ENCODE measurements at regions of chr6 and their contacts with region 1.

Region 1: GRCh38 chr6:125956506-125957390 is at the start of gene HINT3:
- DNase-seq: peak; percentile 97 to 98 (median 98)
- ATAC-seq: peak; percentile 91
- H3K4me3 ChIP-seq: peak within 1 kb of the TSS; percentile 81 to 82
- H3K27ac ChIP-seq: peak within 1 kb of the TSS; percentile 78 to 96 (median 93)
- H3K4me1 ChIP-seq: peaks cover 42% of the 10 kb centered on the region
- H3K27me3 ChIP-seq: no peaks in the 10 kb centered on the region
- CTCF ChIP-seq: peak; percentile 97 to 99 (median 98)
- POLR2A ChIP-seq: peak in 2 of 3 donors; percentile 77 to 80
- total RNA-seq, gene HINT3: 8.8 to 14.5 TPM

Region 2: GRCh38 chr6:125790358-125791150 is 166.2 kb before region 1 on chr6 and contains the start of gene NCOA7:
- intact Hi-C with region 1: loop called (anchors 10 kb)
- DNase-seq: peak; percentile 69 to 79 (median 74)
- ATAC-seq: peak; percentile 86
- H3K4me3 ChIP-seq: peak within 1 kb of the TSS; percentile 72 to 84
- H3K27ac ChIP-seq: peak within 1 kb of the TSS; percentile 90 to 97 (median 94)
- H3K4me1 ChIP-seq: peaks cover 29% of the 10 kb centered on the region
- H3K27me3 ChIP-seq: no peaks in the 10 kb centered on the region
- CTCF ChIP-seq: peak in 1 of 7 experiments; percentile 22
- POLR2A ChIP-seq: peak; percentile 77 to 88 (median 83)
- total RNA-seq, gene NCOA7: 26.5 to 30.0 TPM

Region 3: DNA sequence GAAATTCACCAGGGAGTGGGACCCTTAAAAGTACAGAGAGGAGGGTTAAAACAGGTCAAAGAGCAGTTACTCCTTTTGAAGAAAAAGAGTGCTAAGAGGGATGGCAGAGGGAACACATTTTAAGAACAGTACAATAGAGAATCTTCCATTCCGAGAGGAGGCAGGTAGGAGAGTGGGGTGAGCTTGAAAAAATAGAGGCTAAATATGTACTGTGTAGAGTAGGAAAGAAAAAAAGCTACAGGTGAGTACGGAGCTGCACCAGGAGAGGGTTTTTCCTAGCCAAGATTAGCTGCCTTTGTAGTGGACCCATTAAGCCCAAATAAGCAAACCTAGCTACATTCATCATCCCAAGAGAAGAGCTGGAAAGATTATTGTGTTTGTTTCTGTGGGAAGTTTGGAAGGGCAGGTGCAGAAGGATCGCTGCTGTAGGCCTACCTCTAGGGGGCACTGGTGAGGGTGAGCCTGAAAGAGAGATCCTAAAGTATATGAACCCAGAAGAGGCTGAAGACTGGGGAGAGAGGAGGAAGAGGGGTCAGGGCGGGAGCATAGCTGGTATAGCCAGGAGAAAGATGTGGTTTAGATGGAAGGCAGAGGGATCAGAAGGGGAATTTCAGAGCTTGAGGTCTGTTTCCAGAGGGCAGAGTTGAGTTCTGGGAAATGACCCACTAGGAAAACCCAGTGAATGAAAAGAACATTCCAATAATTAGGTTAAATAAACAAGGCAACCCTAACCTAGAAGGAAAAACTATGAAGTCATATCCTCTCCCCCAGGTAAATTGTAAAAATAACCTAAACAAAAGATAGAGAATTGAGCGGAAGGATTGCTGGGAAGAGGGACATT is 50.4 kb before region 1 on chr6:
- intact Hi-C with region 1: loop called (anchors 10 kb)
- DNase-seq: peak; percentile 45 to 62 (median 56)
- ATAC-seq: peak; percentile 73
- H3K4me3 ChIP-seq: no peak overlapping the region
- H3K27ac ChIP-seq: no peak overlapping the region
- H3K4me1 ChIP-seq: peaks cover 11% of the 10 kb centered on the region
- H3K27me3 ChIP-seq: no peaks in the 10 kb centered on the region
- CTCF ChIP-seq: peak; percentile 37 to 75 (median 63)
- POLR2A ChIP-seq: no peak

Region 4: DNA sequence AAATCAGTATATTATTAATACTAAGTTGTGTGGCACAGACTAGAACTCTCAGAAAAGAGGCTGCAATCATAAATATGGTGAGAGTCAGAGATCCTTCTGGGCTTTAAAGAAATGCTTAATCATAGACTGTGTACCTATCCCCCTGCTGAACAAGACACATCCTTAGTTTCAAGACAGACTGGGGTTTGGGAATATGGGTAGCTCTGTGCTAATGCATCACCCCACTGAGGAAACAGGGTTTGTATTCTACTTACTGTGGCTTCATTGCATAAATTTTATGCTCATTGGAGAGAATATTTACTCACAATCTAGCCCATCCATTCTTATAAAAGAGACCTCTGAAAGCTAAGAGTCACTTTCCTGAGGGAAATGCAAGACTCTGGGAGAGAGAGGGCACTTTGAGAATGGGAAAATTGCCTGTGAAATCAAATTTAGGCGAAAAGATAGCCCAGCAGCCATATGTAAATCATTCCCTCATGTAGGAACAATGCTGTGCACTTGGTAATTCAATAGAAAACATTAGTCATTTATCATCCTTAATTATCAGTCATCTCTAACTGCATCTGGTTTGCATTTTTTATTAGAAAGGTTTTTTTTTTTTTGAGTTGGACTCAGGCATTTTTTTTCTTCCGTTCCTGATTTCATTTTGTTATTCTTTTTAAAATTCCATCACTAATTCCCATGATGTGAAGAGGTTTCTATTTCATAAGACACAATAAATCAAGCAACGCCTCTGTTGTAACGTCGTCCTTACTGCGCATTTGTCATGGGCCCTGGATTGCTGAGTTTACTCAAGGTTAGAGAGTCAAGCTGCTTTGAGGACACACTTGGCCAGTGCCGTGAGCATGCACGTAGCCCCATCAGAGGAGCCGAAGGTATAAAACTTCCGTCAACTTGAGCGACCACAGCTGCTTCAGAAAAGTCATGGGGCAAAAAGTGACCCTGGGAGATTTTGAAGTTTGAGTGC is 121.3 kb after region 1 on chr6:
- intact Hi-C with region 1: no loop called
- DNase-seq: peak in 1 of 4 donors; percentile 13
- ATAC-seq: peak; percentile 15
- H3K4me3 ChIP-seq: no peak overlapping the region
- H3K27ac ChIP-seq: no peak overlapping the region
- H3K4me1 ChIP-seq: peaks cover 13% of the 10 kb centered on the region
- H3K27me3 ChIP-seq: no peaks in the 10 kb centered on the region
- CTCF ChIP-seq: no peak
- POLR2A ChIP-seq: no peak

Region 5: GRCh38 chr6:126112144-126112632 is 155.4 kb after region 1 on chr6:
- intact Hi-C with region 1: no loop called
- DNase-seq: peak in 1 of 4 donors; percentile 9
- ATAC-seq: no peak
- H3K4me3 ChIP-seq: no peak overlapping the region
- H3K27ac ChIP-seq: no peak overlapping the region
- H3K4me1 ChIP-seq: no peaks in the 10 kb centered on the region
- H3K27me3 ChIP-seq: no peaks in the 10 kb centered on the region
- CTCF ChIP-seq: no peak
- POLR2A ChIP-seq: no peak

Measured in body of pancreas (tissue), 4 donors.